CD8-positive, alpha-beta memory T cell (primary cell): ENCODE measurements at regions of chr12 and their contacts with region 1.

Region 1: DNA sequence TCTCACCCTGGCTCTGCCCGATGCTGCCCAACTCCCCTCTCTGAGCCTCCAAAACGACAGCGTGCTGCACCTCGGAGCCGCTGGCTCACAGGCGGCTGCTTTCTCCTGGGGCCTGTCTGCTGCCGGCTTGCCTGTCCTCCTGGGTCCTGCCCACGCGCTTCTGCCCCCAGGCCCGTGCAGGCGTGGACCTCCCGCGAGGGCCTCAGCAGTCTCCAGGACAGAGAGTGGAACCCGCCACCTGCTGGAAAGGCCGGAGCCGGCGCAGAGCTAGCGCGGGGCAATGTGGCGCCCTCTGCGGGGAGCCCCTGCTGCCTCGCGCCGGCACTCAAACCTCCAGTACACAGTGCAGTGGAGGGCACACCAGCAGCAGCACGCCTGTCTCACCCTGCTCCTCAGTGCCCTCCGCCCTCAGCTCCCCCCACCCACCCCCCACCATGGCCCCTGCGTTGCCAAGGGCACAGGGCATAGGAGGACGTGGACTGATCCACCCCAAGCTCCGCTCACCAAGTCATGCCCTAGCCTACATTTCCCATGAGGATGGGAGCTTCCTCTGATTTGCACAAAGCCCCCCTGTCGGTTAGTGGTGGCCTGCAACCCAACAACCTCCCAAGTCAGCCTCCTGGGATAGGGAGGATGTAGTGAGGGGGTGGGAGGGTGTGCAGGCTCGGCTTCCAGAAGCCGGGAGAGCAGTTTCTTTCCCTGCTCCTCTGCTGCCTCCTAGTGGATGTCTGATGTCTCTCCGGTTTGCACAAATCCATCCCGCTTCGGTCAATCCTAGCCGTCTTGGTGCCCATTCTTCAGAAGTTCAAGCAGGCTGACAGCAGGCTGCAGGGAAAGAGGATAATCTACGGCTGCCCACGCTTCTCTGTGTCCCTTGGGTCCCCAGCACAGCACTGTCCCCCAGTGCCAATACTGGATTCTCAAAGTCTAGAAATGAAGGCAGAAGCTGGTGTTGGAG is 25.2 kb downstream of the KRT8 start:
- DNase-seq: peak; percentile 48 to 71 (median 56)
- H3K4me3 ChIP-seq: peak overlapping the region; percentile 49
- H3K4me3 Mint-ChIP-seq: peak overlapping the region in 6 of 7 donors; percentile 53 to 76 (median 68)
- H3K27ac ChIP-seq: no peak overlapping the region
- H3K27ac Mint-ChIP-seq: peak overlapping the region in 1 of 8 donors; percentile 27
- H3K4me1 ChIP-seq: peaks cover 7% of the 10 kb centered on the region
- H3K4me1 Mint-ChIP-seq: peaks cover 9 to 14% (median 9%) of the 10 kb centered on the region in 3 donors
- H3K27me3 ChIP-seq: no peaks in the 10 kb centered on the region
- H3K27me3 Mint-ChIP-seq: peaks cover 7 to 16% of the 10 kb centered on the region in 2 donors

Region 2: GRCh38 chr12:52372216-52373154 is 507.2 kb before region 1 on chr12:
- CTCF ChIA-PET with region 1: interaction called, 12 read pairs
- POLR2A ChIA-PET with region 1: no interaction called
- DNase-seq: peak in 3 of 5 donors; percentile 23 to 28 (median 23)
- H3K4me3 ChIP-seq: no peak overlapping the region
- H3K4me3 Mint-ChIP-seq: no peak overlapping the region
- H3K27ac ChIP-seq: no peak overlapping the region
- H3K27ac Mint-ChIP-seq: no peak overlapping the region
- H3K4me1 ChIP-seq: no peaks in the 10 kb centered on the region
- H3K4me1 Mint-ChIP-seq: no peaks in the 10 kb centered on the region
- H3K27me3 ChIP-seq: no peaks in the 10 kb centered on the region
- H3K27me3 Mint-ChIP-seq: peaks cover 24 to 29% of the 10 kb centered on the region in 2 donors

Region 3: DNA sequence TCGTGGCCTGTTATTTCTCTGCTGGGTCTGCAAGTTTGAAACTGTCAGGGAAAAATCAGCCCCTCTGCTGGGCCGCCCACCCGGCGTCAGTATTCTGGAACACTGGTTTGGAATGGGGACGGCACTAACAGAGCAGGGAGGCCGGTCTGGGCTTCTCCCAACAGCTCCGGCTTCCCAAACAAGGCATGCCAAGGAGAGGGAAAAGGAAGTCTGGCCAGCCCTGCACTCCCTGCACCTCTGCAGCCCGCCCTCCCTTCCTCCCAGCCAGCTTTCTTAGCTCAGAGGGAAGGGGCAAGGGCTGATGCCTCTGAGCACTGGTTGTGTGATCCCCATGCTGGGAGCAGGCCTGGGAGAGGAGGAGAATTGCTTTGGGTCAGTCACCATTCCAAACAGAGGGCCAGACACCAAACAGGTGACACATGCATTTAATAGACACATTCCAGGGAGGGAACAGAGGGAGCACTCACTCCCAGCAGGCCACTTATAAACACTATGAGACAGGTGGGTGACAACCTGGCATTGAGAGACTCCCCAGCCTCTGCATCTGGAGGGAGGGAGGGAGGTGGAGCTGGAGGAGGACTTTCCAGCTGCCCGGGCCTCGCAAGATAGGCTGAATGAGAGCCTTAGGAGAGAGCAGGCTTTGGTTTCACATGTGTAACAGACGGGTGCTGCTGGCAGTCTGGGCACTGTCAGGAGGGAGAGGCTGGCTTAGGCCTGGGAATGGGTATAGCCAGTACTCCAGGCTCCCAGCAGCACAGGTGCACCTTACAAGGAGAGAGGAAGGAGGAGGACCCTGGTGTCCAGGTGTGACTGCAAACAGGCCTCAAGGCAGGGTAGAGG is 455.8 kb before region 1 on chr12:
- CTCF ChIA-PET with region 1: no interaction called
- POLR2A ChIA-PET with region 1: no interaction called
- DNase-seq: no peak
- H3K4me3 ChIP-seq: no peak overlapping the region
- H3K4me3 Mint-ChIP-seq: no peak overlapping the region
- H3K27ac ChIP-seq: no peak overlapping the region
- H3K27ac Mint-ChIP-seq: peak overlapping the region in 1 of 8 donors; percentile 88
- H3K4me1 ChIP-seq: no peaks in the 10 kb centered on the region
- H3K4me1 Mint-ChIP-seq: no peaks in the 10 kb centered on the region
- H3K27me3 ChIP-seq: no peaks in the 10 kb centered on the region
- H3K27me3 Mint-ChIP-seq: peaks cover 14 to 38% of the 10 kb centered on the region in 2 donors

Region 4: DNA sequence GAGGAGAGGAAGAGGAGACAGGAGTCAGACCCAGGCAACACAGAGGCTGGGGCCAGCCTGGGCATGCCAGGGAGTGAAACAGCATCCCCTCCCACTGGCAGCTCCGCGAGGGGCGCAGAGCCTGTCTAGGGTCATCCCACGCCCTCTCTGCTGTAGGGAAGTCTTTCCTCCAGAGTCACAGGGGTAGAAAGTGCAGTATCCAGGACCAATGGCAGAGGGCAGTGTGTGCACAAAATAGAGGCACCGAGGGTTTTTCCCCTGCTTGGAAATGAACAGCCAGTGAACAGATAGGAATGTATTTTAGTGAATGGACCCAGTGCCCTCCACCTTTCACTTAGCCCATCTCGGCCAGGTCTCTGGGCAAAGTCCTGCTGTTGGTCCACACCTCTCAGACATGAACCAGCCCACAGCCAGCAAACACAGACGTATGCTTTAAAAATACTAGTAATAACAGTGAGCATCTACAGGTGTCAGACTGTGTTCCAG is 296.7 kb before region 1 on chr12:
- CTCF ChIA-PET with region 1: interaction called, 276 read pairs
- POLR2A ChIA-PET with region 1: interaction called, 3 read pairs
- DNase-seq: peak; percentile 37 to 76 (median 54)
- H3K4me3 ChIP-seq: no peak overlapping the region
- H3K4me3 Mint-ChIP-seq: no peak overlapping the region
- H3K27ac ChIP-seq: no peak overlapping the region
- H3K27ac Mint-ChIP-seq: peak overlapping the region in 5 of 8 donors; percentile 80 to 95 (median 86)
- H3K4me1 ChIP-seq: peaks cover 54% of the 10 kb centered on the region
- H3K4me1 Mint-ChIP-seq: peaks cover 26 to 43% (median 33%) of the 10 kb centered on the region in 3 donors
- H3K27me3 ChIP-seq: no peaks in the 10 kb centered on the region
- H3K27me3 Mint-ChIP-seq: peaks cover 5 to 11% of the 10 kb centered on the region in 2 donors

Region 5: GRCh38 chr12:52895061-52895887 is 15.6 kb after region 1 on chr12:
- CTCF ChIA-PET with region 1: interaction called, 38 read pairs
- POLR2A ChIA-PET with region 1: no interaction called
- DNase-seq: no peak
- H3K4me3 ChIP-seq: no peak overlapping the region
- H3K4me3 Mint-ChIP-seq: no peak overlapping the region
- H3K27ac ChIP-seq: no peak overlapping the region
- H3K27ac Mint-ChIP-seq: no peak overlapping the region
- H3K4me1 ChIP-seq: no peaks in the 10 kb centered on the region
- H3K4me1 Mint-ChIP-seq: no peaks in the 10 kb centered on the region
- H3K27me3 ChIP-seq: no peaks in the 10 kb centered on the region
- H3K27me3 Mint-ChIP-seq: peaks cover 8 to 9% of the 10 kb centered on the region in 2 donors

Region 6: GRCh38 chr12:52980693-52981423 is 101.2 kb after region 1 on chr12:
- CTCF ChIA-PET with region 1: interaction called, 267 read pairs
- POLR2A ChIA-PET with region 1: no interaction called
- DNase-seq: peak; percentile 65 to 87 (median 74)
- H3K4me3 ChIP-seq: no peak overlapping the region
- H3K4me3 Mint-ChIP-seq: no peak overlapping the region
- H3K27ac ChIP-seq: no peak overlapping the region
- H3K27ac Mint-ChIP-seq: no peak overlapping the region
- H3K4me1 ChIP-seq: no peaks in the 10 kb centered on the region
- H3K4me1 Mint-ChIP-seq: peaks cover 0 to 2% (median 0%) of the 10 kb centered on the region in 3 donors
- H3K27me3 ChIP-seq: no peaks in the 10 kb centered on the region
- H3K27me3 Mint-ChIP-seq: peaks cover 33 to 60% of the 10 kb centered on the region in 2 donors